MCF 10A (cell line): ENCODE measurements at regions of chr17 and their contacts with region 1.

Region 1: DNA sequence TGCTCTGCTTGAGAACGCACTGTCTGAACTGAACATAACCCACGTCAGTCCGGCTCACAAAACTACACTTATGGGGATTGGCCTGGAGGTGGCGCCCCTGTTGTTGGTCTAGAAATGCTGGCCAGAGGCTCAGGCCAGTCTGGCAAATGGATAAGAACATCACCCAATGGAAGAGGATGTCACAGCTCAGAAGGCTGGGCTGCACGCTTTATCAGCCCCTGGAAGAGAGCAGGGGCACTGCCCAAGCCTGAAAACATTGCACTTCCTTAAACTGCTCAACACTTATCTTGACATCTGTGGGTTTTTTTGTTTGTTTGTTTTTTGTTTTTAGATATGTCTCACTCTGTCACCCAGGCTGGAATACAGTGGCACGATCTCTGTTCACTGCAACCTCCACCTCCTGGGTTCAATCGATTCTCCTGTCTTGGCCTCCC is 24.8 kb upstream of the BPTF start:
- DNase-seq: peak; percentile 83
- H3K4me3 Mint-ChIP-seq: no peak overlapping the region
- H3K27ac Mint-ChIP-seq: no peak overlapping the region
- H3K4me1 Mint-ChIP-seq: no peaks in the 10 kb centered on the region
- H3K27me3 Mint-ChIP-seq: peaks cover 12% of the 10 kb centered on the region
- CTCF ChIP-seq: peak; percentile 62

Region 2: GRCh38 chr17:67824735-67825626 is 24.5 kb after region 1 on chr17 and contains the start of gene BPTF:
- CTCF ChIA-PET with region 1: interaction called, 6 read pairs
- POLR2A ChIA-PET with region 1: interaction called, 5 read pairs
- intact Hi-C with region 1: loop called (anchors 1 kb)
- DNase-seq: peak; percentile 91
- H3K4me3 Mint-ChIP-seq: peak within 1 kb of the TSS; percentile 99
- H3K27ac Mint-ChIP-seq: peak within 1 kb of the TSS; percentile 95
- H3K4me1 Mint-ChIP-seq: peaks cover 6% of the 10 kb centered on the region
- H3K27me3 Mint-ChIP-seq: no peaks in the 10 kb centered on the region
- CTCF ChIP-seq: peak; percentile 94
- total RNA-seq, gene BPTF: 54.9 and 63.7 TPM in 2 replicates

Region 3: DNA sequence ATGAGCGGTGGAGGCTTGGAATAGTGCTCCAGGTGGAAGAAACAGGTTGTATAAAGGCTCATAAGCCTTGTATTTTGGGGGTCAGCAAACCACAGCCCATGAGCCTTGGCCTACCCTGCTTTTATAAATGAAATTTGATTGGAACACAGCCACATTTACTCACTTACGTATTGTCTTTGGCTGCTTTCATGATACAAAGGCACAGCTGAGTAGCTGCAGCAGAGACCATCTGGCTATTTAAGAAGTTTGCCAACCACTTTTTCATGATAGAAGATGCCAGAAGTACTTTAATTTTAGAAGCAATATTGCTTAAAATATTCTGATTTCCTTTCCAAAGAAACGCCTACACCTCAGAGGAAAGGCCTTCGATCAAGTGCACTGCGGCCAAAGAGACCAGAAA is 122.0 kb after region 1 on chr17:
- CTCF ChIA-PET with region 1: no interaction called
- POLR2A ChIA-PET with region 1: no interaction called
- intact Hi-C with region 1: no loop called
- DNase-seq: no peak
- H3K4me3 Mint-ChIP-seq: no peak overlapping the region
- H3K27ac Mint-ChIP-seq: no peak overlapping the region
- H3K4me1 Mint-ChIP-seq: no peaks in the 10 kb centered on the region
- H3K27me3 Mint-ChIP-seq: no peaks in the 10 kb centered on the region
- CTCF ChIP-seq: no peak